A673 (cell line): ENCODE measurements at regions of chr7 and their contacts with region 1.

Region 1: GRCh38 chr7:131546583-131547111 is 9.8 kb downstream of the PODXL start:
- DNase-seq: peak; percentile 81
- H3K4me3 ChIP-seq: no peak overlapping the region
- H3K27ac ChIP-seq: no peak overlapping the region
- H3K4me1 ChIP-seq: peaks cover 20% of the 10 kb centered on the region
- H3K27me3 ChIP-seq: no peaks in the 10 kb centered on the region
- CTCF ChIP-seq: peak; percentile 98

Region 2: DNA sequence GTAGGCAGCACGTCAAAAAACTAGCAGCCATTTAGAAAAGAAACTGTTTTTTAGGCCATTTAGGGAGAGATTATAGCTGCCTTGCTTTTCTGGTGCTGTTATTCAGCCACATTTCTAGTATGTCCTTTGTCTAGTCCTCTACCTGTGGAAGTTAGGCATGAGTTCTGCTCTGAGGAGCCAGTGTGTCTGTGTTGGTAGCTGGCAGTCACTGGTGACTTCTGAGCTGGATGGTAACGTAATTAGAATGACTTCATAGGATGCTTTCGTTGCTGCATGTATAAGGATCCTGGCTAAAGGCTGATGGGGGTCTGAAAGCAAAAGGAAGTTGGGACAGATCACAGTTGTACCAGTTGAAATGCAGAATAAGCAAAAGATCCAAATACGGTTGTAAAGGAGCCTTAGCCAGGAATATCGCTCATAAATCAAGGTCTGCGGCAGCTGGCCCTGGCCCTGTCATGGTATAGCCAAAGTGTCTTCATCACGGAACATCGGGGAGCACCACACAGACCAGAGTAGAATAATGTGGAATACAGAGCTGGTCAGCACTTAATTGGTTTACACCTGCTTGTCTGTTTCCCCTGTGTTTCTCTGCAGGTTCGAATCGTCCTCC is 1932.9 kb after region 1 on chr7:
- CTCF ChIA-PET with region 1: interaction called, 10 read pairs
- POLR2A ChIA-PET with region 1: no interaction called
- intact Hi-C with region 1: no loop called
- DNase-seq: no peak
- H3K4me3 ChIP-seq: no peak overlapping the region
- H3K27ac ChIP-seq: no peak overlapping the region
- H3K4me1 ChIP-seq: peaks cover 27% of the 10 kb centered on the region
- H3K27me3 ChIP-seq: no peaks in the 10 kb centered on the region
- CTCF ChIP-seq: no peak